ENCODE measurements at regions of chr15 and their contacts with region 1.

Region 1: DNA sequence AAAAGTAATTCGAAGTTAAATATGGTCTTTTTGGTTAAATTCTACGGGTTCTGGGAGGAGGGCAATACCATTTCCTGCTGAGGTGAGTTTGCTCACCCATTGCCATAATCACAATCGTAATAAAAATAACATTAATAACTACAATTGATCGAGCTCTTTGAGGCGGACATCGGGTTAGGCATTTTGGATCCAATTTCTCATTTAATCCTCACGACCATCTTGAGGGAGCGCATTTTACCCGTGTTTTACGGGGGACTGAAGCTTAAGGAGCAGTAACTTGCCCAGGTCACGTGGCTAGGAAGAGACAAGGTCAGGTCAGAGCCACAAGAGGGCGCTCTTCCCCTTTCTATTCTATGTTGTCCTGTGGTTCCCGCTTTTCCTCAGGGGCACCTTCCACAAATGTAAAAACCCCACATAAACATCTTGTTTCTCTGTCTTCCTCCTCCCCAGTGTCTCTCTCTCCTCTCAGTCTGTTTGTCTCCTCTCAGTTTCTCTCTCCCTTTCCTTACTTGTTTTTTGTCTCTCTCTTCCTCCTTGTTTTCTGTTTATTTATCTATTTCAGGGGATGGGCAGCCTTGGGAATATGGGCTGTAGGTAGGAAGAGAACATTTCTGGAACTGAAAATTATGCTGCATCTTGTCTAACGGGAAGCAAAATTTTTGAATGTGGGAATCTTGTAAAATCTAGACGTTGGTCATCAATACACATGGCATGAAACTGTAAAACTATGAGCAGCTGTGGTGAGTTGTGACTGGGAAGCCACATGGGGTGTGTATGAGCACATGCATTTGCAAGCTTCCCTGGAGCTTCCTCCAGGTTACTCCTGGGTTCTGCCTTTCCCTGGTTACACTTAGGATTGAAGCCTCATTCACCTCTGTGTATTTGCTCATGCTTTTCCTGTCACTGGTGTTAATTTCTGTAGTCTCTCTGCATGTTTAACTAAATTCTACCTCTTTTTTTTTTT is 71.0 kb downstream of the SQOR start:
- DNase-seq: peak; percentile 57
- H3K4me3 Mint-ChIP-seq: peak overlapping the region; percentile 83
- H3K27ac Mint-ChIP-seq: no peak overlapping the region
- H3K4me1 Mint-ChIP-seq: peaks cover 14% of the 10 kb centered on the region
- H3K27me3 Mint-ChIP-seq: peaks cover 17% of the 10 kb centered on the region

Region 2: DNA sequence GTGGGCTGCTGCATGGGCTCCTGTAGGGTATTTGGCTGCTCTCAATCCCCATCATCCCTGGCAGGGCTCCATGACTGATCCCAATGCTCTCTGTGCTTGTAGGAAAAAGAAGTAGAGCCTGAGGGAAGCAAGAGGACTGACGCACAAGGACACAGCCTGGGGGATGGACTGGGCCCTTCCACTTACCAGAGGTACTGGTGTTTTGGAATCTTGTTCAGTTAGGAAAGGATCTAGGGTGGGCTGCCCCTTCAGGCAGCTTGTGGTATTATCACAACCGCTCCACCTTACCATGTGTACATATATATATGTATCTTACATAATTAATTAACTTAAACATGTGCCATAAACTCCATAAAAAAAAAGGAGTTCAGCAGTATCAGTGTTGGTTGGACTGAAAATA is 452.5 kb before region 1 on chr15:
- intact Hi-C with region 1: no loop called
- DNase-seq: no peak
- H3K4me3 Mint-ChIP-seq: no peak overlapping the region
- H3K27ac Mint-ChIP-seq: no peak overlapping the region
- H3K4me1 Mint-ChIP-seq: no peaks in the 10 kb centered on the region
- H3K27me3 Mint-ChIP-seq: peaks cover 1% of the 10 kb centered on the region

Region 3: GRCh38 chr15:45486317-45486716 is 219.5 kb before region 1 on chr15:
- intact Hi-C with region 1: no loop called
- DNase-seq: no peak
- H3K4me3 Mint-ChIP-seq: no peak overlapping the region
- H3K27ac Mint-ChIP-seq: no peak overlapping the region
- H3K4me1 Mint-ChIP-seq: no peaks in the 10 kb centered on the region
- H3K27me3 Mint-ChIP-seq: no peaks in the 10 kb centered on the region

Region 4: DNA sequence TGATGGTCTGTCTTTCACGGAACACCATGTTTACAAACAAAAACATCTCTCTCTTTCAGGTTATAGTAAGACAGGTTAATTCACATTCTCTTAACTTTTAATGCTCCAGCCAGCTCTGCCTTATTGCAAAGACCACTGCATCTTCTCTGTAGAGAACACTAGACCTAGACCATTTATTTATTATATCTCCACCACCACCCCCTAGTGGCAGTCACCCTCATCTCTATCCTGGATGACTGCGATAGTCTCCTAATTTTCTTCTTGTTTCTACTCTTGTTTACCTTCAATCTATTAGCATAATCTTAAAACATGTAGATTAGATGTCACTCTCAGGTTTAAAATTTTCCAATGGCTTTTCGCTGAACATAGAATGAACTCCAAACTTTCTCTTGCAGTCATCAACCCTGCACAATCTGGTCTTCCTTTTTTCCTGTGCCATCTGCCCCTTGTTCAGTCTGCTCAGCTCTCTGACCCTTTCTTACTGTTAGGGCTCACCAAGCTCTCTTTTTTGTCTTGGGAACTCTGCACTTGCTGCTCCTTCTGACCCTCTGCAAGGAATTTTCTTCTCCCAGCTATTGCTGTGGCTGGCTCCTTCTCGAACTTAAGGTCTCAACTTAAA is 84.6 kb after region 1 on chr15:
- intact Hi-C with region 1: loop called (anchors 5 kb)
- DNase-seq: no peak
- H3K4me3 Mint-ChIP-seq: no peak overlapping the region
- H3K27ac Mint-ChIP-seq: no peak overlapping the region
- H3K4me1 Mint-ChIP-seq: no peaks in the 10 kb centered on the region
- H3K27me3 Mint-ChIP-seq: peaks cover 2% of the 10 kb centered on the region

Region 5: GRCh38 chr15:46088486-46089445 is 383.0 kb after region 1 on chr15:
- intact Hi-C with region 1: no loop called
- DNase-seq: no peak
- H3K4me3 Mint-ChIP-seq: no peak overlapping the region
- H3K27ac Mint-ChIP-seq: no peak overlapping the region
- H3K4me1 Mint-ChIP-seq: no peaks in the 10 kb centered on the region
- H3K27me3 Mint-ChIP-seq: no peaks in the 10 kb centered on the region

Measured in activated T-helper 2 cell treated with anti-CD3 and anti-CD28 coated beads, Interferon-gamma antibody, Interleukin-2, Interleukin-4, amounts not matched to agents 10 μg/mL and 5 μg/mL and 100 μg/mL, durations not matched to agents 14 hours and 24 hours and 36 hours (primary cell).